Activated CD4-positive, alpha-beta T cell treated with anti-CD3 and anti-CD28 coated beads for 36 hours (primary cell): ENCODE measurements at regions of chr6 and their contacts with region 1.

Region 1: GRCh38 chr6:18509871-18510643 is 122.9 kb downstream of the RNF144B start:
- DNase-seq: peak; percentile 69
- ATAC-seq: peak; percentile 63
- H3K4me3 Mint-ChIP-seq: no peak overlapping the region
- H3K27ac Mint-ChIP-seq: peak overlapping the region; percentile 10
- H3K4me1 Mint-ChIP-seq: peaks cover 43% of the 10 kb centered on the region
- H3K27me3 Mint-ChIP-seq: peaks cover 3% of the 10 kb centered on the region

Region 2: DNA sequence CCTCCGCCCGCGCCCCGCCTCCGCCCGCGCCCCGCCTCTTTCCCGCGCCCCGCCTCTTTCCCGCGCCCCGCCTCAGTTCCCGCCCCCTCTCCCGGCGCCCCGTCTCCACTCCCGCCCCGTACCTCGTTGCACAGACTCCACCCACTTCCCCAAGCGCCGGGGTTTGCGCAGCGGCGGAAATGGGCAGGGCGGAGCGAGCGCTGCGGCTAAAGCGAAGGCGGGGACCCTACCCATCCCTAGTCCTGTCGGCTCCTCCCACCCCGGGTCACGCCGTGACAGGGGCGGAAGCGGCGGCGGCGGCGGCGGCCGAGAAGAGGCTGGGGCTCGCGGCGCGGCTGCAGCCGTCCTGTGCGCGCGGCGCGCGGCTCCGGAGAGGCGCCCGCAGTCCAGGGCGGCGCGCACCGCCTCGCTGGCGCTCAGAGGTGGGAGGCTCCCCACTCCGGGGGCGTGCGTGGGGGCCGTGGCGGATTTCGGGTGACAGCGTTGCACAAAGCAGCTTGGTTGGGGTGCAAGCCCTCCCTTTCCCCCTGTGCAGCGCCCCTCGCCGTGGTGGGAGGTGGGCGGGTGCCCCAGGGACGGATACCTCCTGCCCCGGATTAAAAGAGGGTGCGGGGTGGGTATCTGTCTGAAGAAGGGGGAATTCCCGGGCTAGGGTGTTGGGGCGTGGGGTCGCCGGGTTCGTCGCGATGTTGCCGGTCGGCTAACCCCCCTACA is 354.8 kb before region 1 on chr6 and contains the start of gene KDM1B:
- CTCF ChIA-PET with region 1: no interaction called
- POLR2A ChIA-PET with region 1: no interaction called
- intact Hi-C with region 1: loop called in 1 of 2 experiments (anchors 2 kb)
- DNase-seq: peak; percentile 99
- ATAC-seq: peak; percentile 97
- H3K4me3 Mint-ChIP-seq: peak within 1 kb of the TSS; percentile 93
- H3K27ac Mint-ChIP-seq: peak within 1 kb of the TSS; percentile 90
- H3K4me1 Mint-ChIP-seq: peaks cover 27% of the 10 kb centered on the region
- H3K27me3 Mint-ChIP-seq: no peaks in the 10 kb centered on the region
- total RNA-seq, gene KDM1B: 13.4 to 13.9 TPM

Region 3: DNA sequence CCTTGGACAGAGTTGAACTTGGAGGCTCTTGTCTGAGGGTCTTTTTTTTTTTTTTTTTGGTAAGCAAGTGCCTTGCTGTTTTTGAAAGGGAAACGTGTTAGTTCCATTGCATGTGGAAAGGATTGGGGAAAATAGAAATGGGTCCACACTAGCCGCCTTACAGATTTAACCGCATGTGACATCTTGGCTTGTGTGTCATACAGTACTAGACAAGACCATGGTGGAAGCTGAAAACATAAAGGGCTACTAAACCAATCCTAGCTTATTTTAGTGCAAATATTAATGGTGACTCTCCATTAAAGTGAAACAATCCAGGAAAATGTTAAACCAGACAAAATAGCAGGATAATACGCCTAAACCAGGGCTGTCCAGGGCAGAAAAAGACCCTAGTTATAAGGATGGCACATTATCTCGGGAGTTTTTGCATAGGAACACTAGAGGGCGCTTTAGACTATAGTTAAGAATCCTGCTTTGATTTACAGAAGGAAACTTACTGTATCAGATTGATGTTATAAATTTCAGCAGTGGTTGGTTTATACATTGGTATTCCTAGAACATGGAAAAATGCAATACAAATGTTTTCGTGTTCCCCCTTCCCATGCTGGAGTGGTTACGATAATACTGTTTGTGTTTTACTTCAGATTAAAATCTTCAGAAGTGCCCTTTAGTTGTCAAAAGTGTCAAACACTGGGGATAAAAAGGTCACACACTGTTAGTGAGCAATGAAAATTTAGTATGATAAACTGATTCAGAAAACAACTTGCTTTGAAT is 185.9 kb before region 1 on chr6:
- CTCF ChIA-PET with region 1: interaction called, 153 read pairs
- POLR2A ChIA-PET with region 1: no interaction called
- intact Hi-C with region 1: loop called in 1 of 2 experiments (anchors 1 kb)
- DNase-seq: no peak
- ATAC-seq: peak; percentile 49
- H3K4me3 Mint-ChIP-seq: no peak overlapping the region
- H3K27ac Mint-ChIP-seq: no peak overlapping the region
- H3K4me1 Mint-ChIP-seq: peaks cover 14% of the 10 kb centered on the region
- H3K27me3 Mint-ChIP-seq: peaks cover 10% of the 10 kb centered on the region

Region 4: DNA sequence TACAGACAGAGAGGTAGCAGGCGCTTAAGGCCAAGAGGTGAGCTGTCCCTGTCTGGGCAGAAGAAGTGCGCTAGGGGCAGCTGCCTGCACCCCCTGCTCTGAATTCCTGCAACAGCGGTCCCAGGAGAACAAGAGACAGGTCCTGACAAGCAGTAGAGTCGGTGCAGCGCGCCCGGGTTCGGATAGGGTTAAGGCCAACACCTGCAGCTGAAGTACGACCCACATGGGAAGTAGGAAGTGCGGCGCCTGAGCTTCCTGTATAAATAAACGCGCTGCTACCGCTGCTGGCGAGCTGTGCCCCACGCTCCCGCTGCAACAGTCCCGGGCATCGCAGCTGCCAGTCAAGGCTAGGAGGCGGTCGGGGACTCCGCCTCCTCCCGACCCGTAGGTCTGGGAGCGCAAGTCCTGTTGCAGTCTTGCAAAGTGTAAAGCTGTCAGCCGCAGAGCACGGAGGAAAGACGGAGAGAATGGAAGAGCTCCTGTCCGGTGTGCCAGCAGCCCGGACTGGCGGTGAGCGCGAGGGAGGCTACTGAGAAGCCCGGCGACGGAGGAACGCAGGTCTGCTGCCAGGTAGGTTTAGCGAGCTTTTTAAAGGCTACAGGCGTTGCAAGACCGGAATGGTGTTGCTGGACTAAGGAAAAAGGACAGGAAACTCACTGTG is 122.9 kb before region 1 on chr6 and contains the start of gene RNF144B:
- CTCF ChIA-PET with region 1: no interaction called
- POLR2A ChIA-PET with region 1: no interaction called
- intact Hi-C with region 1: loop called in 1 of 2 experiments (anchors 5 kb)
- DNase-seq: peak; percentile 79
- ATAC-seq: peak; percentile 93
- H3K4me3 Mint-ChIP-seq: peak within 1 kb of the TSS; percentile 92
- H3K27ac Mint-ChIP-seq: peak within 1 kb of the TSS; percentile 79
- H3K4me1 Mint-ChIP-seq: peaks cover 41% of the 10 kb centered on the region
- H3K27me3 Mint-ChIP-seq: peaks cover 2% of the 10 kb centered on the region
- total RNA-seq, gene RNF144B: 3.4 to 3.9 TPM

Region 5: DNA sequence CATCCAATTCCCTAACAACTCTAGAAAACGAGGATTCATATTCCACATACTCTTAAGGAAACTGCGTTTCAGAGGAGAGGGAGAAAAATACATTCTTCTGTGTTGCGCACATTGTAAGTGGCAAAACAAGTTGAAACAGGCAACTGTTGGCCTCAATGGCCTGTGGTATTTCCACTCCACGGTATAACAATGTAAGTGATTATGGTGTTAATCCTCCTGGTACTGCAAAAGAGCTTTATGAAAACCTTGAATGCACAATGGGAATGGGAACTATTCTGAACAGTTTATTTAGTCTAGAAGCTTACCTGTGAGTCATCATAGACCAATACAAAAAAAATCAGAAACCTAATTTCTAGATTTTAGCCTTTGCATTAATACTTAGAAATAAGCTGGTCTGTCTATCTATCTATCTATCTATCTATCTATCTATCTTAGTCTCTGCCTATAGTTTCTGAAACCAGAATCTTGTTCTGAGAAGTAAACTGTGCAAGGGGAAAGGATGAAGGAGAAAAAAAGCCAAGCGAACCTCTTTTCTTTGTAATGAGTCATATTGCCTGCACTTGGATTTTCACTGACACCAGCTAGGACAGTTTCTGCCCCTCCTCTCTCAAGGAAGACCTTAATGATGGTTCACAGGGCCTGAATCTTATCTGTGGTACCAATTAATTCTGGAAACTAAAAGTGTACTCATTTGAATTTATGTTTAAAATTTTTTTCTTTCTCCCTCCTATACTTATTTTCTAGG is 21.4 kb before region 1 on chr6:
- CTCF ChIA-PET with region 1: interaction called, 3 read pairs
- POLR2A ChIA-PET with region 1: no interaction called
- intact Hi-C with region 1: loop called (anchors 1 to 2 kb)
- DNase-seq: no peak
- ATAC-seq: no peak
- H3K4me3 Mint-ChIP-seq: no peak overlapping the region
- H3K27ac Mint-ChIP-seq: no peak overlapping the region
- H3K4me1 Mint-ChIP-seq: peaks cover 16% of the 10 kb centered on the region
- H3K27me3 Mint-ChIP-seq: peaks cover 27% of the 10 kb centered on the region